HEK293 (cell line): ENCODE measurements at regions of chr18 and their contacts with region 1.

Region 1: DNA sequence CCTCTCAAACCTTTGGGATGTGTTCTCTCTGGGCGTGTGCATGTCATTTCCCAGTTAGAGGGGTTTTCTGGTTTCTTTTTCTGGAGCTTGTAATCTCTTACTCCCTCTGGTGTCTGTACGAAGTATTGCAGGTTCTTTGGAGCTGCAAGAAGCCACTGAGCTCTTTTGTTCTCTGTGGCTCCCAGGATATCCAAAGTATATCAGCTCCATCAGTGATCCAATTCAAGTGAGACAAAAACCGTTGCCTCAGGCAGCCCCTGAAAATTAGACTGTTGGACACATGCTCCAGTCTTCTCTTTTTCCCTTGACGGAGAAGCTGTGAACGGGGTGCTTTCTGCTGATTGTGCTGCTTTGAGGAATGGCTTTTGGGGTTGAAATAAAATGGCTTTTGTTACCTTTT is 59.0 kb upstream of the LDLRAD4 start:
- H3K4me3 ChIP-seq: no peak overlapping the region
- H3K27ac ChIP-seq: no peak overlapping the region
- H3K4me1 ChIP-seq: no peaks in the 10 kb centered on the region
- CTCF ChIP-seq: no peak

Region 2: DNA sequence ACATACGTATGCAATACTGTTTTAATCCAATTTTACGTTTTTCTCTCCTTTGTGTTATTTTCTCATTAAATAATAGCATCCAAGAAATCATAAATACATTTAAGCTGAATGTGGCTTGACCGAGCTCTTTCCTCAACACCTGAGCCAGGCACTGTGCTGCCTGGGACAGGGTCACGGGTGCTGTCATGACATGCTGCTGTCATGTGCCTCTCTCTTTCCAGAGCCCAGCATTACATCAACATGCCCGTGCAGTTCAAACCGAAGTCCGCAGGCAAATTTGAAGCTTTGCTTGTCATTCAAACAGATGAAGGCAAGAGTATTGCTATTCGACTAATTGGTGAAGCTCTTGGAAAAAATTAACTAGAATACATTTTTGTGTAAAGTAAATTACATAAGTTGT is 35.2 kb before region 1 on chr18:
- CTCF ChIA-PET with region 1: interaction called, 11 read pairs
- POLR2A ChIA-PET with region 1: no interaction called
- H3K4me3 ChIP-seq: no peak overlapping the region
- H3K27ac ChIP-seq: no peak overlapping the region
- H3K4me1 ChIP-seq: no peaks in the 10 kb centered on the region
- CTCF ChIP-seq: no peak

Region 3: GRCh38 chr18:13175754-13176210 is 16.2 kb after region 1 on chr18:
- CTCF ChIA-PET with region 1: interaction called, 13 read pairs
- POLR2A ChIA-PET with region 1: no interaction called
- H3K4me3 ChIP-seq: no peak overlapping the region
- H3K27ac ChIP-seq: no peak overlapping the region
- H3K4me1 ChIP-seq: no peaks in the 10 kb centered on the region
- CTCF ChIP-seq: no peak

Region 4: DNA sequence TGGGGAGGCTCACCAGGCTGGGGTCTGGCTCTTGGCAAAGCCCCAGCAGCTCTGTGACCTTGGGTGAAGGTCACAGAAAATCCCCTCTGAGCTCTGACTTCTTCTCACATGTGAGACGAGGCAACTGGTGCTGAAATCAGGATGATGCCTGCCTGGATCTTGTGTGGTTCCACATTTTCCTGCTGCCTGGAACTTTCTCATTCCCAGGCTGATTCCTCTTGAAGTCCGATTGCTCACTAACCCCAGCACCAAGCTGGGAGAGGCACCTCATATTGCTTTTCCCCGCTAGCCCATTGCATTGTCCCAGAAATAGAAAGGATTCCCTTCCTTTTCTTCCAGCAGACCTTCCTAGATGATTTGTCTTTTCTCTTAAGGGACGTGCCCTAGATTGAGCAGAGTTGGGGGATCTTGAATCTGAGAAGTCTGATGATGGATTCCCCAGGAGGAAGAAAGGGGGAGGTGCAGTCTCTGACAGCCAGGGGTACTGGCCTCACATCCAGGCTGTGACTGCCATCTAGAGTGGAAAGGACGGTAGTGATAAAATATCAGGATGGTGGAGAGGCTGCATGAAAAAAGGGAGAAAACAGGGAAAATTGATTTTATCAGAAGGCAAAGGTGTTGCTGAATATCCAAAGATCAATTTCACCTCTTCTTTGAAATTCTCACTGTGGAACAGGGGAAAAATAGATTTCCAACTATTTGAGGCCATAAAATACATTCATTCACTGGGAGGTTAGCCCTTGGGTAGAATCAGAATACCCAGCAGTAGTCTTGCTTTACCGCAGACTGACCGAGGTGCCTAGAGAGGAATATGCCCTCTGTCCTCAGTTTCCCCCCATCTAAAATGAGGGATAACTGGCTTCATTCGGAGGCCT is 470.5 kb after region 1 on chr18:
- CTCF ChIA-PET with region 1: interaction called, 11 read pairs
- POLR2A ChIA-PET with region 1: no interaction called
- H3K4me3 ChIP-seq: no peak overlapping the region
- H3K27ac ChIP-seq: no peak overlapping the region
- H3K4me1 ChIP-seq: no peaks in the 10 kb centered on the region; the same call in 1 of the 2 replicates
- CTCF ChIP-seq: peak; percentile 84